ENCODE measurements at regions of chr20 and their contacts with region 1.

Region 1: DNA sequence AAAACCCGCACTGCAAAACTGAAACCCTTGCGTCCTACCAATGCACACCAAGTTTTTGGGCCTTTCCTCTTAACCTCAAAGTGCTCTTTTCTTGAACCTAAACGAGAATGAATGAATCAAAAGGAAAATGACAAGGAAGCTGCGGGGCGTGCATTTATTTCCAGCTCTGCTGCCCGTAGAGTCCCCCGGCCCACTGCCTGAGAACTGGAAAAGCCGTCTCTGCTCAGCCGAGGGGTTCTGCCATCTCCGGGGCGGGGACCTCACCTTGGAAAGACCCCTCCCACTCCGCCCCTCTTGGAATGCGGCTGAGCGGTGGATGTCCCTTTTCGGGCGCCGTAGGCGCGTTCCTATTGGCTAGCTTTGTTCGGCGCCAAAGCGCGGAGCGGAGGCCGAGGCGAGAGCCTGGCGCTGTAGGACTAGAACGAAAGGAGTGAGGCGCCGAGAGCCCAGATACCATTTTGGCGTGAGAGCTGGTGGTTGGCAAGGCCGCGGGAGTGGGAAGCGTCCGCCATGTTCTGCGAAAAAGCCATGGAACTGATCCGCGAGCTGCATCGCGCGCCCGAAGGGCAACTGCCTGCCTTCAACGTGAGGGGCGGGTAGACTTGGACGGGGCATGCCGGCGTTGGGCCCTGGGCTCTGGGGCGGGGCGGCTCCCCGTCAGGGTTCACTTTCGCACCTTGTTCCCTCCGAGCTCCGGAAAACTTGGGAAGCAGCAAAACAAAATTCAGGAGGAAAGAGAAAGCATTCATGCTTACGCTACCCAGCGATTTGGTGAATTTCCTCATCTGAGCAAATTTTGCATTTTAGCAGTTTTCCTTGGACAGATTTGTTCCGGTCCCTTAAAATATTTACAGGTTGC is at the start of gene GINS1:
- DNase-seq: peak; percentile 92
- H3K4me3 Mint-ChIP-seq: peak within 1 kb of the TSS; percentile 92
- H3K27ac Mint-ChIP-seq: peak within 1 kb of the TSS; percentile 91
- H3K4me1 Mint-ChIP-seq: peaks cover 17% of the 10 kb centered on the region
- H3K27me3 Mint-ChIP-seq: no peaks in the 10 kb centered on the region
- total RNA-seq, gene GINS1: 25.5 to 27.7 TPM

Region 2: DNA sequence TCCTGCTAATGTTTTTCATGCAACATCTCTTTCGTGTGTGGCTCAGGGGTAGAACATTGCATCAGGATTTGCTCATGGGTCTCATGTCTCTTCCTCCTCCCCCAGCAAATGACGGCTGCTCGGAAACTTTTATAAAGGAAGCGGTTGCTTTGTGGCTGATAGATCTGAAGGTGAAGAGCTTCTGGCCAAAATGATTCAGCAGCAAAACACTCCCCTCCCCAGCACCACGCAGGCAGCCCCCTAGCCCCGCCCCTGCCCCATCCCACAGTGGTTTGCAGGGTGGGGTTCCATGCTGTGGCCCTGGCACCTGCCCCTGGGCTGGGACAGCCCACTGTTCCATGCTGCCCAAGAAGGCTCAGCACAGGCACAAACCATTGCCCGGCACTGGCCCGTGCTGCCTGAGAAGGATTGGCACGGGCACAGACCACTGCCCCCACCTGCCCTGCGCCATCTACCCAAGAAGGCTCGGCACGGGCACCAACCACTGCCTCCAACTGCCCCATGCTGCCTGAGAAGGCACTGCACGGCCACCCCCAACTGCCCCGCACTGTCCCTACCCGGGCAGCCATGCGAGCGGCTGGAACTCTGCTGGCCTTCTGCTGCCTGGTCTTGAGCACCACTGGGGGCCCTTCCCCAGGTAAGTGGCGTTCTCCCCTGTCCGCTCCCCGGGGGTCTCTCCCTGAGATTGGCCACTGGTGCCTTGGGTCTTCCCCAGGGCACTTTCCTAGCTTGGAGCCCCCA is 458.4 kb before region 1 on chr20 and contains the start of gene CST7:
- CTCF ChIA-PET with region 1: no interaction called
- intact Hi-C with region 1: loop called (anchors 5 kb)
- DNase-seq: peak; percentile 94
- H3K4me3 Mint-ChIP-seq: peak within 1 kb of the TSS; percentile 72
- H3K27ac Mint-ChIP-seq: peak within 1 kb of the TSS; percentile 96
- H3K4me1 Mint-ChIP-seq: peaks cover 40% of the 10 kb centered on the region
- H3K27me3 Mint-ChIP-seq: no peaks in the 10 kb centered on the region
- total RNA-seq, gene CST7: 37.8 to 43.1 TPM

Region 3: DNA sequence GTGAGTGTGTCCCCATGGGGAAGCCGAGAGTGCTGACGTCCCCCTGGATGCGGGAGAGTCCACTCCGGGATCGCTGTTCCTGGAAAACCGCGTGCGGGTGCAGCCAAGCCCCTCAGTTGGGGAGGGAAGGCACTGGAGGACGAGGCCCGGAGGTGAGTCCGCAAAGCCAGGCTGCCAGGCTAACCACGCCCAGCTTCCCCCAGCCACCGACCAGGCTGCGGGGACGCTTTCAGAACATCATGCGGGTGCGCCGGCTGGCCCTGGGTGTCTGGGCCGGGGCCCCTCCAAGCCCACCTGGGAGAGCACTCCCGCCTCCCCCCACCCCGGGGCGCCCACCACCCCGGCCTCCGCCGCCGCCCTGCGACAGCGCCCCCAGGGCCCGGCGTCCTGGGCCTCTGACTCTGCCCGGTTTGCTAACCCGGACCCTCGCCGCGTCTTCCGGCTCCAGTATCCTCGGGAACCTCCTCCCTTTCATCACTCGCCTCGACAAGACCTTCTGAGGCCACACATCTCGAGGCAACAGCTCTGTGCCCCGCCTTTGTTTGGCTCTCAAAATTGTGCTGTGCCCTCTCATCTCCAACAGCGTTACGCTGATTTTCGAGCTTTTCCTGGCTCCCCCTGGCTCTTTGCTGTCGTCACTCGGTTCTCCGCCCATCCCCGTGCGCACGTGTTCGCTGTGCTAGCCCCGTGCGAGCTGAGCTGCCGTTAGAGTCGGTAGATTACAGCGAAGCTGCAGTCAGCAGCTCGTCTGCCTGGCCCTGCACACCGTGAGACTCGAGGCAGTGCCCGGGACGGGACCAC is 259.2 kb before region 1 on chr20:
- CTCF ChIA-PET with region 1: no interaction called
- intact Hi-C with region 1: no loop called
- DNase-seq: peak; percentile 80
- H3K4me3 Mint-ChIP-seq: peak overlapping the region; percentile 76
- H3K27ac Mint-ChIP-seq: no peak overlapping the region
- H3K4me1 Mint-ChIP-seq: peaks cover 6% of the 10 kb centered on the region
- H3K27me3 Mint-ChIP-seq: peaks cover 4% of the 10 kb centered on the region

Region 4: DNA sequence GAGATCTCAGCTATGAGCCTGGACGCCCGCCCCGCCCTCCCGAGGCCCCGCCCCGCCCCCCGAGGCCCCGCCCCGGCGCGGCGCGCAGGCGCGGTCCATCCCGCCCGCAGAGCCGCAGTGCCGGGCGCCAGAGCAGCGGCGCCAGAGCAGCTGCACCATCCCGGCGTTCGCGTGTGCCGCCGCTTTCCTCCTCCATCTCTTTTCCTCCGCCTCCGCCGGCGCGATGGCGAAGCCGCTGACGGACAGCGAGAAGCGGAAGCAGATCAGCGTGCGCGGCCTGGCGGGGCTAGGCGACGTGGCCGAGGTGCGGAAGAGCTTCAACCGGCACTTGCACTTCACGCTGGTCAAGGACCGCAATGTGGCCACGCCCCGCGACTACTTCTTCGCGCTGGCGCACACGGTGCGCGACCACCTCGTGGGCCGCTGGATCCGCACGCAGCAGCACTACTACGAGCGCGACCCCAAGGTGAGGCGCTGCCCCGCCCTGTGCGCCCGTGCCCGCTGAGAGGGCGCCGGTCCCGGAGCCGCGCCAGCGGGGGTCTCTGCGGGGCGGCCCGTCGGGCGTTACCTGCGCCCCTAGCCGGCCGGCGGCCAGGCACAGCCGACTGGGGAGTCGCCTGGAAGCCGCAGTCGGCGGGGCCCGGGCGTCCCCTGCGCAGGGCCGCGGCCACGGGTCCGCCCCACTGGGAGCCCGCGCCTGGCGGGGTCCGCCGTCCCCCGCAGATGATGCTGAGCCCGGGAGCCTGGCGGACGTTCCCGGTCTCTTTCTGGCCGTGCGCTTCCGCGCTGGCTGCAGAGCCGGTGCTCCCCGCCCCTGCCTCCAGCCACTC is 159.4 kb before region 1 on chr20 and contains the start of gene PYGB:
- CTCF ChIA-PET with region 1: no interaction called
- intact Hi-C with region 1: loop called (anchors 5 kb)
- DNase-seq: peak; percentile 68
- H3K4me3 Mint-ChIP-seq: peak within 1 kb of the TSS; percentile 91
- H3K27ac Mint-ChIP-seq: peak within 1 kb of the TSS; percentile 82
- H3K4me1 Mint-ChIP-seq: peaks cover 57% of the 10 kb centered on the region
- H3K27me3 Mint-ChIP-seq: peaks cover 7% of the 10 kb centered on the region
- total RNA-seq, gene PYGB: 19.6 to 20.0 TPM

Region 5: GRCh38 chr20:25390538-25391528 is 16.7 kb before region 1 on chr20 and contains the start of gene ABHD12:
- CTCF ChIA-PET with region 1: interaction called, 3 read pairs
- intact Hi-C with region 1: loop called (anchors 1 kb)
- DNase-seq: peak; percentile 97
- H3K4me3 Mint-ChIP-seq: peak within 1 kb of the TSS; percentile 87
- H3K27ac Mint-ChIP-seq: peak within 1 kb of the TSS; percentile 81
- H3K4me1 Mint-ChIP-seq: peaks cover 11% of the 10 kb centered on the region
- H3K27me3 Mint-ChIP-seq: no peaks in the 10 kb centered on the region
- total RNA-seq, gene ABHD12: 13.0 to 14.7 TPM

Region 6: GRCh38 chr20:25696384-25697131 is 289.0 kb after region 1 on chr20 and contains the start of gene ZNF337:
- CTCF ChIA-PET with region 1: no interaction called
- intact Hi-C with region 1: loop called (anchors 1 kb)
- DNase-seq: peak; percentile 96
- H3K4me3 Mint-ChIP-seq: peak within 1 kb of the TSS; percentile 93
- H3K27ac Mint-ChIP-seq: peak within 1 kb of the TSS; percentile 81
- H3K4me1 Mint-ChIP-seq: peaks cover 26% of the 10 kb centered on the region
- H3K27me3 Mint-ChIP-seq: no peaks in the 10 kb centered on the region
- total RNA-seq, gene ZNF337: 12.2 to 12.6 TPM

Region 7: DNA sequence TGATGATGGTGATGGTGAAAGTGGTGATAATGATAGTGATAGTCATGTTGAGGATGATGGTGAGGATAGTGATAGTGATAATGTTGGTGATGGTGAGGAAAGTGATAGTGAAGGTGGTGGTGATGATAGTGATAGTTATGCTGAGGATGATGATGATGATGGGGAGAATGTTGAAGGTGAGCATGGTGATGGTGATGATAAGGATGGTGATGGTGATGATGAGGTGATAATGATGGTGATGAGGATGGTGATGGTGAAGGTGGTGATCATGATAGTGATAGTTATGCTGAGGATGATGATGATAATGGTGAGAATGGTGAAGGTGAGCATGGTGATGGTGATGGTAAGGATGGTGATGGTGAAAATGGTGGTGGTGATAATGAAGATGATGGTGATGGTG is 354.1 kb after region 1 on chr20:
- CTCF ChIA-PET with region 1: no interaction called
- intact Hi-C with region 1: no loop called
- DNase-seq: no peak
- H3K4me3 Mint-ChIP-seq: no peak overlapping the region
- H3K27ac Mint-ChIP-seq: no peak overlapping the region
- H3K4me1 Mint-ChIP-seq: no peaks in the 10 kb centered on the region
- H3K27me3 Mint-ChIP-seq: no peaks in the 10 kb centered on the region